Dorsolateral prefrontal cortex (tissue), 120 donors: ENCODE measurements at regions of chr12 and their contacts with region 1.

Region 1: GRCh38 chr12:120265473-120266179 is at the start of gene PXN:
- DNase-seq: peak; percentile 67 to 92 (median 79)
- H3K4me3 ChIP-seq: peak within 1 kb of the TSS; percentile 62 to 95 (median 86)
- H3K27ac ChIP-seq: peak within 1 kb of the TSS in 55 of 59 donors; percentile 16 to 95 (median 77)
- H3K27me3 ChIP-seq: no peaks in the 10 kb centered on the region
- CTCF ChIP-seq: peak; percentile 53 to 95 (median 86)
- total RNA-seq, gene PXN: 15.7 to 57.9 (median 32.8) TPM

Region 2: DNA sequence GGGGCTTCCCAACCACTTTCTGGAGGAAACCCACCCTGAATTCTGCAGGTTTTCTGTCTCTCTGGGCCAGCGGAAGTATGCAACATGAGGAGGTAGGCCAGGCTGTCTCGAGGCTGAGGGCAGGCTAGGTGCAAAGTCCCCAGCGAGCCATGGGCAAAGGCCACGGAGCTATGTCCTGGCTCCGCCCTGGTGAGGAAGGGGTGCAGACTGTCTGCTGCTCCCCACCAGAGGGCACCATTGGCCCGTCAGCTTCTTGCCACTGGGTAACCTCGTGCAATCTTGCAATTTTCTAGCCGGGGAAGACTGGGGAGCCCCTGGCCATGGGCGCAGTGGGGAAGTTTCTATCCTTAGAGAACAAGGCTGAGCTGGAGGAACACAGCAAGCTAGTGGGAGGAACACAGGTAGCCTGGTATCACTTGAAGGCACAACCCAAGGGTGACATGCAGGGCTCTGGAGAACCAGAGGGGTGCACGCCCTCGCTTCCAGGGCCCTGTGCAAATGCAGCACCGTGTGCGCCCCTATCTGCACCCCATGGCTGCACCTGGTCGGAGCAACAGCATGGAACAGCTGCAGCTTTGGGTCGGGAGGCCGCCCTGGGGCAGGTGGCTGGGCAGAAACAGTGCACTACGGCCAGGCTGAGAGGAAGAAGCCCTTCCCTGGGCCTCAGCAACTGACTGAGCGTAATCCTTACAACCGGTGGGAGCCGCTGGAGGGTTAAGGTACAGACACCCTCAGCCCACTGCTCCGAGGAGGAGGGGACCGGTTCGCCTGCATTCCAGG is 37.1 kb before region 1 on chr12:
- intact Hi-C with region 1: loop called (anchors 1 kb)
- DNase-seq: peak; percentile 79 to 90 (median 84)
- H3K4me3 ChIP-seq: peak overlapping the region in 17 of 59 donors; percentile 1 to 36 (median 17)
- H3K27ac ChIP-seq: peak overlapping the region in 44 of 59 donors; percentile 2 to 94 (median 51)
- H3K27me3 ChIP-seq: no peaks in the 10 kb centered on the region
- CTCF ChIP-seq: peak; percentile 73 to 99 (median 96)